ENCODE measurements at regions of chrX and their contacts with region 1.

Region 1: DNA sequence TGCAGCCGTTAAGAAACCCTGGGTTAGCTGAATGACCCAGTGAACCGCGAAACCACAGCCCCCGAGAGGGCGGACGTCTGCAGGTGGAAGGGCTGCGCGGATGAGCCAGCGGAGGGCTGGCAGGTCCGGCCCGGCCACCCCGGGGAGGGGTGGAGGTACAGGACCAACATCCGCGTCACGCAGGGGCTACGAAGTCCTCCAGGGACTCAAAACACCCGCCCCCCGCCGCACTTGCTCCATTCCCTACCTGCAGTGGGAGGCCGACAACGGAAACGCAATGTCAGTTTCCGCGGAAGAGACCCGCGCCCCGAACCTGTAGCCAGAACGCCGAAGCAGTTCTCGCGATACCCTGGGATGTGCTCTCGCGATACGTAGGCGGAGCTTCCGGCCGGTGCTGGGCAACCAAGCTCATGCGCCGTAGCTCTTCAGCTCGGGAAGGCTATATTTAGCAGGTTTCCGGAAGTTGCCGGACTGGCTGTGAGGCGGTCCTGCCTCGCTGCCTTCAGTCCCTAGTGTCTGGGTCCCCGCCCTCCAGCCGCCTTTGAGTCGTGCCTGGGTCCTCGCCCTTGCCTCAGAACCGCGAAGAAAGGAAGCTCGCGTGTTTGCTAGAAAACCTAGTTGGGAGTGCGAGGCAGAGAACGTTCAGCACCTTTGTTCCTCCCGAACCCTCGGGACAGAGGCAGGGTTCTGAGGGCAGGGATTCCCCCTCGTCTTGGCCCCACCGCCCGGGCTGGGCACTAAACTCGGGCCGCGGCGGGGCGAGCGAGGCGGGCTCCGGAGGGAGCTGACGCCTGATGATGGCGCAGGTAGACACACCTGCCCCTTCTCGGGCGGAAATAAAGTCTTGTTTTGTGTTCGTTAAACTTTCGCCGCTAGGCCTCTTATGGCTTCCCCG is at the starts of genes OFD1 and TRAPPC2:
- DNase-seq: peak; percentile 97
- H3K4me3 ChIP-seq: peak within 1 kb of the TSS; percentile 67 to 90 (median 82)
- H3K27ac ChIP-seq: peak within 1 kb of the TSS; percentile 91 to 97 (median 95)
- H3K4me1 ChIP-seq: peaks cover 0 to 33% (median 0%) of the 10 kb centered on the region in 4 donors
- H3K27me3 ChIP-seq: no peaks in the 10 kb centered on the region
- CTCF ChIP-seq: peak in 1 of 5 experiments; percentile 16
- EP300 ChIP-seq: no peak
- POLR2A ChIP-seq: peak; percentile 98
- total RNA-seq, gene OFD1: 27.2 to 184 (median 62.8) TPM
- total RNA-seq, gene TRAPPC2: 14.2 to 25.9 (median 15.1) TPM

Region 2: GRCh38 chrX:13345037-13345436 is 389.5 kb before region 1 on chrX:
- in situ Hi-C with region 1: no loop called
- intact Hi-C with region 1: no loop called
- DNase-seq: no peak
- H3K4me3 ChIP-seq: no peak overlapping the region
- H3K27ac ChIP-seq: no peak overlapping the region
- H3K4me1 ChIP-seq: peaks cover 0 to 2% (median 0%) of the 10 kb centered on the region in 4 donors
- H3K27me3 ChIP-seq: no peaks in the 10 kb centered on the region
- CTCF ChIP-seq: no peak
- EP300 ChIP-seq: no peak
- POLR2A ChIP-seq: no peak

Region 3: GRCh38 chrX:13653022-13653693 is 81.4 kb before region 1 on chrX and contains the start of gene TCEANC:
- in situ Hi-C with region 1: loop called in 1 of 4 experiments (anchors 10 kb)
- intact Hi-C with region 1: no loop called
- DNase-seq: peak; percentile 97
- H3K4me3 ChIP-seq: peak within 1 kb of the TSS; percentile 41 to 66 (median 54)
- H3K27ac ChIP-seq: peak within 1 kb of the TSS; percentile 86 to 98 (median 94)
- H3K4me1 ChIP-seq: peaks cover 0 to 13% (median 7%) of the 10 kb centered on the region in 4 donors
- H3K27me3 ChIP-seq: no peaks in the 10 kb centered on the region
- CTCF ChIP-seq: no peak
- EP300 ChIP-seq: no peak
- POLR2A ChIP-seq: peak; percentile 77
- total RNA-seq, gene TCEANC: 0.20 to 9.1 (median 3.7) TPM

Region 4: DNA sequence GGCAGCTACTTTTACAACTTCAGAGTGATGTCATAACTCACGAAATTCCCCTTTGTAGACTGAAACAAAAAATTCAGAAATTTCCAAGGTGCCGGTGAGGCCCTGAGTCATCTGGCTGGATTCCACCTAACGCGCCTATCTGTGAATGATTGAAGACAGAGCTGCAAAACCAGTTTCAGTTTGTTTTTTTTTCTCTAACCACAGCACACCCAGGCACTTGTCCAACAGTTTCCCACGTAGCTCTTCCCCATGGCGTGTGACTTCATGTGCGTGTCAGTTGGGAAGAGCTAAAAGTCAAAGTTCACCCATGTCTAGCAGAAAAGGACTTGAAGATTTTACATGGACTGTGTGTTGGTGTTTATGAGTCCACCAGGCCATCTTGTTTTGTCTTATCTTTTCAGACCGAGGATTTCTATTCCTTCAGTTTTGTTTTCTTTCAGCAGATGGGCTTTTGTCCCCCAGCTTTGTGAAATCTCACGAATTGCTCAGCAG is 65.2 kb before region 1 on chrX:
- in situ Hi-C with region 1: no loop called
- intact Hi-C with region 1: loop called (anchors 10 kb)
- DNase-seq: peak; percentile 82
- H3K4me3 ChIP-seq: peak overlapping the region in 1 of 4 donors; percentile 1
- H3K27ac ChIP-seq: peak overlapping the region; percentile 62 to 81 (median 72)
- H3K4me1 ChIP-seq: peaks cover 4 to 15% (median 7%) of the 10 kb centered on the region in 4 donors
- H3K27me3 ChIP-seq: no peaks in the 10 kb centered on the region
- CTCF ChIP-seq: no peak
- EP300 ChIP-seq: peak; percentile 12
- POLR2A ChIP-seq: no peak

Measured in transverse colon (tissue), 4 donors.